ENCODE measurements at regions of chr2 and their contacts with region 1.

Region 1: GRCh38 chr2:71460595-71461303 is 7.4 kb downstream of the DYSF start:
- DNase-seq: peak; percentile 72
- H3K4me3 ChIP-seq: no peak overlapping the region
- H3K27ac ChIP-seq: peak overlapping the region; percentile 36
- H3K4me1 ChIP-seq: peaks cover 55% of the 10 kb centered on the region
- H3K27me3 ChIP-seq: no peaks in the 10 kb centered on the region
- CTCF ChIP-seq: peak; percentile 55 to 72
- POLR2A ChIP-seq: no peak

Region 2: GRCh38 chr2:71423817-71424420 is 36.8 kb before region 1 on chr2:
- CTCF ChIA-PET with region 1: interaction called, 28 read pairs
- POLR2A ChIA-PET with region 1: interaction called, 7 read pairs
- dilution Hi-C with region 1: no loop called
- intact Hi-C with region 1: no loop called
- DNase-seq: peak; percentile 91
- H3K4me3 ChIP-seq: peak overlapping the region in 1 of 3 experiments; percentile 13
- H3K27ac ChIP-seq: peak overlapping the region; percentile 78
- H3K4me1 ChIP-seq: peaks cover 37% of the 10 kb centered on the region
- H3K27me3 ChIP-seq: no peaks in the 10 kb centered on the region
- CTCF ChIP-seq: peak in 1 of 2 donors; percentile 15
- POLR2A ChIP-seq: peak; percentile 52

Region 3: GRCh38 chr2:71474116-71474743 is 13.5 kb after region 1 on chr2:
- CTCF ChIA-PET with region 1: interaction called, 19 read pairs
- POLR2A ChIA-PET with region 1: interaction called, 5 read pairs
- dilution Hi-C with region 1: no loop called
- intact Hi-C with region 1: no loop called
- DNase-seq: no peak
- H3K4me3 ChIP-seq: no peak overlapping the region
- H3K27ac ChIP-seq: no peak overlapping the region
- H3K4me1 ChIP-seq: peaks cover 15% of the 10 kb centered on the region
- H3K27me3 ChIP-seq: no peaks in the 10 kb centered on the region
- CTCF ChIP-seq: no peak
- POLR2A ChIP-seq: no peak

Region 4: GRCh38 chr2:71491551-71492511 is 31.1 kb after region 1 on chr2:
- CTCF ChIA-PET with region 1: interaction called, 17 read pairs
- POLR2A ChIA-PET with region 1: no interaction called
- dilution Hi-C with region 1: no loop called
- intact Hi-C with region 1: no loop called
- DNase-seq: peak; percentile 98
- H3K4me3 ChIP-seq: no peak overlapping the region
- H3K27ac ChIP-seq: peak overlapping the region; percentile 96
- H3K4me1 ChIP-seq: peaks cover 41% of the 10 kb centered on the region
- H3K27me3 ChIP-seq: no peaks in the 10 kb centered on the region
- CTCF ChIP-seq: no peak
- POLR2A ChIP-seq: peak; percentile 72

Region 5: GRCh38 chr2:71503837-71504236 is 43.1 kb after region 1 on chr2:
- CTCF ChIA-PET with region 1: interaction called, 670 read pairs
- POLR2A ChIA-PET with region 1: no interaction called
- dilution Hi-C with region 1: no loop called
- intact Hi-C with region 1: loop called (anchors 1 kb)
- DNase-seq: peak; percentile 62
- H3K4me3 ChIP-seq: no peak overlapping the region
- H3K27ac ChIP-seq: peak overlapping the region; percentile 85
- H3K4me1 ChIP-seq: peaks cover 54% of the 10 kb centered on the region
- H3K27me3 ChIP-seq: no peaks in the 10 kb centered on the region
- CTCF ChIP-seq: no peak
- POLR2A ChIP-seq: peak; percentile 70

Region 6: DNA sequence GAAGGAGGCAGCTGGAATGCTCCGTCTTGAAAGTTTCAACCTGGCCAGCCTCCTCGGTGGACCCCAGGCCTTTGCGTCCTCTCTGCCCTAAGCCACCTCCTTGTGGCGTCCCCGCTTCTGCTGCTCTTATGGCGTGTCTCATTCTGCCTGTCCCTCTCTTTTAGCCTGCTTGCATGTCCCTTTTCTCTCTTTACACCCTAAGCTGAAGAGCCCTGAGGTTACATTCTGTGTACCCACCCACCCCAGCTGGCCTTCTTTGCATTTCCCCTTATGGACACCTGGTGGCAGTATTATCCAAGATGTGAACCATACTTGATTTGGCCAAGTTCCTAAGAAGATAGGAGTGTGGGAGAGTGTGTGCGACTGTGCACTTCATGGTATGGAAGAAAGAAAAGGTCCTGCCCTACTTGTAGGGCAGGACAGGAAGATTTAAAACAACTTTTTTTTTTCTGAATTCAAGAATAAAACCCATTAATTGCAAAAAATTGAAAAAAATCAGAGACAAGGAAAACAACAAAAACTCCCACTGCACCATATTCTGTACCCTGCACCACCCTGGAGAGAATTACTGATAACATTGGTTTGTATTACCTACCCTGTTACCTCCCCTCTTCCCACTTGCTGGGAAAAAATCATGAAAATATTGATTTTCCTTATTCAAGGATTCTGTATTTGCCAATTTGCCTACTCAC is 70.0 kb after region 1 on chr2:
- CTCF ChIA-PET with region 1: interaction called, 12 read pairs
- POLR2A ChIA-PET with region 1: no interaction called
- dilution Hi-C with region 1: no loop called
- intact Hi-C with region 1: no loop called
- DNase-seq: peak; percentile 64
- H3K4me3 ChIP-seq: no peak overlapping the region
- H3K27ac ChIP-seq: peak overlapping the region; percentile 40
- H3K4me1 ChIP-seq: peaks cover 7% of the 10 kb centered on the region
- H3K27me3 ChIP-seq: no peaks in the 10 kb centered on the region
- CTCF ChIP-seq: peak; percentile 64 to 67
- POLR2A ChIP-seq: no peak